HEK293 (cell line): ENCODE measurements at regions of chr20 and their contacts with region 1.

Region 1: GRCh38 chr20:43514062-43514999 is 6.8 kb downstream of the L3MBTL1 start:
- H3K4me3 ChIP-seq: peak overlapping the region; percentile 74
- H3K27ac ChIP-seq: peak overlapping the region; percentile 60; the same call in 1 of the 2 replicates
- H3K4me1 ChIP-seq: peaks cover 6% of the 10 kb centered on the region; the same call in 1 of the 2 replicates
- CTCF ChIP-seq: peak; percentile 62

Region 2: DNA sequence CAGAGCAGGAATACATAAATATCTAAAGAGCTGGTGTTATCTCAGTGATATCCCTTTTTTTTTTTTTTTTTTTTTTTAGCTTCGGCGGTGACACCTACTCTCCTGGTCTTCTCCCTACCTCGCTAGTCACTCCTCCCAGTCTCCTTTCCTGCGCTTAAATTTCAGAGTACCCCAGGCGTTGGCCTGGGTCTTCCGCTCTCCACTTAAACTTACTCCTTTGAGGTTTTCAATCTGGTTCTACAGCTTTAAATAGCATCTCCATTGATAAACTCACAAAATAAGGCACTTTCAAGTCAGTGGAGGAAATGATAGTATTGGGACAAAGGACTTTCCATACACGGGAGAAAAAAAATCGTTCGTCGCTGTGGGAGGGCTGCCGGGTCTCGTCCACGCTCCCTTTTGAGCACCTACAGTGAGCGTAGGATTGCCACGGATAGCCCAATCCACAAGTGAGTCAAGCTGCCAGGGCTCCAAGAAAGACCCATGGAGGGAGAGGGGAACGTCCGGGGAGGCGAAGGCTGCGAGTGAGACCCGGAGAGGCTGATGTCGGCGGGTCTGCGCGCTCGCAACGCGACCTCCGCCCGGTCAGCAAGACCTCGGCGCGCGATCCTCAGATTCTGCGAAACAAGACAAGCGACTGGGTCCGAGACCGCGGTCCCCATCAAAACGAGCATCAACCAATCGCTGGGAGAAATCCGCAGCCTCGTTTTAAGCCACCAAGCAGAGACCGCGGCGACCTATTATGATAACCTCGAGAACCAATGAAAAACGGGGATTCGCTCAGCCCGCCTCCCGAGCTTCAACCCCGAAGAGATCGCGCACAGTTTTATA is 57.3 kb before region 1 on chr20:
- CTCF ChIA-PET with region 1: no interaction called
- POLR2A ChIA-PET with region 1: interaction called, 36 read pairs
- H3K4me3 ChIP-seq: peak overlapping the region; percentile 91
- H3K27ac ChIP-seq: peak overlapping the region; percentile 99
- H3K4me1 ChIP-seq: no peaks in the 10 kb centered on the region
- CTCF ChIP-seq: no peak

Region 3: GRCh38 chr20:43530321-43531090 is 16.2 kb after region 1 on chr20:
- CTCF ChIA-PET with region 1: interaction called, 3 read pairs
- POLR2A ChIA-PET with region 1: interaction called, 12 read pairs
- H3K4me3 ChIP-seq: no peak overlapping the region
- H3K27ac ChIP-seq: no peak overlapping the region
- H3K4me1 ChIP-seq: no peaks in the 10 kb centered on the region
- CTCF ChIP-seq: no peak

Region 4: DNA sequence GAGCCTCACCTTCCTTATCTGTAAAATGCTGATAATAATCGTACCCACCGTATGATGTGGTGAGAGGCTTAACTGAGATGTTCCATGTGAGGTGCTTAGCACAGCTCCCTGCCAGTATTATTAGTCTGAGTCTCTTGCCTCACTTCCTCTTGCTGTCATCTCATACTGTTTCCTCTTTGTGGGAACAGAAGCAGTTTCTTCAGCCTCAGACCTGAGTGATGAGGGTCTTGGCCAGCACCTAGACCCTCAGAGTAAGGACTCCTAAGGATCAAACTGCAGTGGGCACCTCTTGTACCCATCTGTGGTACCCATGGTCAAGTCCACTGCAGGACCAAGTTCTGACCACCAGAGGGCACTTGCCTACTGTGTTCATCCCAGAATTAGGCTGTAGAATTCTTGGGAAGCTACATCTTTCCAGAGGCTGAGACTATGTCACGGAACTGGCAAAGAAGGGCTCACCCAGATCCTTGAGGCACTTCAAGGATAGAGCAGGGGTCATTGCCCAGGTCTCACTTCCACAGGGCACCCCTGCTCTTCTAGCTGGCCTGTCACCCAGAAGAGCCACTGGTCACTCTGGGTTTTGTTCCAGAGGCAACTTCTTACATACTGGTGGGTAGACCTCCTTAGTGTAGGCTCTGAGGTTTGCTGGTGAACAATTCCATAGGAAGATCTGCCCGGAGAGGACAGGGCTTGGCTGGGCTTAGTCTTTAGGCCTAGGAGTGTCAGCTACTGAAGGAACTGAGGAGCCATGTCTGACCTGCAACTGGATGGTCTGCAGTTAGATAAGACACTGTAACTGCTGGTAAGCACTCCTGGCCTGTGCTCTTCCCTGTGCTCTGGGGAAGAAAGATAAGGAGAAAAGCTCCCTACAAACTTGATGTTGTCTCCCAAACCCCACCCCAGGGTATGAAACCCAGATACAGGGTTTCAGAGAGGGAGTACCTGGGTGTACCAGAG is 23.9 kb after region 1 on chr20:
- CTCF ChIA-PET with region 1: interaction called, 13 read pairs
- POLR2A ChIA-PET with region 1: no interaction called
- H3K4me3 ChIP-seq: no peak overlapping the region
- H3K27ac ChIP-seq: no peak overlapping the region
- H3K4me1 ChIP-seq: no peaks in the 10 kb centered on the region
- CTCF ChIP-seq: peak; percentile 57

Region 5: DNA sequence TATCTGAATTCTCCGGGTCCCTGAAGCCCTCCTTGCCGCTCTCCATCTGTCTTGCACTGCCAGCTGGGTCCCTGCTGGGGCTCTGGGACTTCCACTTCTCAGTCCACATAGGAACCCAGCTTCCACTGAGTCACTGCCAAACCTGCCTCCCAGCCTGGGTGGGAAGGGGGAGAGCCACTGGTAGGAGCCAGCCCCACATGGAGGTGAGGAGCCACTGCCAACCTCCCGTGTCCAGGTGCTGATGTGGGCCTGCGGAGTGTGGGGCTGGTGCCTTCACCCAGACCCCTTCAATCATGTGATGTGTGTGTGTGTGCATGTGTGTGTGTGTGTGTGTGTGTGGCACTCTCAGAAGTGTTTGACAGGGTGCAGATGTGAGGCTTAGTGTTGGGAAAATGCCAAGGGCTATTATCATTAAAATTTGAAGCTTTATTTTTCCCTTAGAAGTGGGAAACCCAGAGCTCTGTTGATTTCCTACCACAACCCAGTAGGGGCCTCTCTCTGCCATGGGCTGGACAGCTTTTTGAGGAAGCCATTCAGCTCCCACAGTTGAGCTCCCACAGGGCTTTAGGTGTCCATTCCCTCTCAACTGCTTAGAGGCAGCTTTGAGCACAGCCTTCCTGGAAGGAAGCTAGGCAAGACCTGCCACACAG is 35.2 kb after region 1 on chr20:
- CTCF ChIA-PET with region 1: no interaction called
- POLR2A ChIA-PET with region 1: no interaction called
- H3K4me3 ChIP-seq: no peak overlapping the region
- H3K27ac ChIP-seq: no peak overlapping the region
- H3K4me1 ChIP-seq: no peaks in the 10 kb centered on the region
- CTCF ChIP-seq: no peak

Region 6: GRCh38 chr20:43590392-43591323 is 76.3 kb after region 1 on chr20 and contains the start of gene IFT52:
- CTCF ChIA-PET with region 1: no interaction called
- POLR2A ChIA-PET with region 1: interaction called, 16 read pairs
- H3K4me3 ChIP-seq: peak within 1 kb of the TSS; percentile 99
- H3K27ac ChIP-seq: peak within 1 kb of the TSS; percentile 78
- H3K4me1 ChIP-seq: no peaks in the 10 kb centered on the region
- CTCF ChIP-seq: no peak